Activated CD4-positive, alpha-beta T cell treated with anti-CD3 and anti-CD28 coated beads, Interleukin-2, amount 10 ng/mL, durations not matched to agents 24 days and 14 days (primary cell): ENCODE measurements at regions of chr14 and their contacts with region 1.

Region 1: GRCh38 chr14:49633640-49634546 is 1.2 kb downstream of the DNAAF2 start:
- DNase-seq: peak; percentile 98
- H3K4me3 Mint-ChIP-seq: peak overlapping the region; percentile 99
- H3K27ac Mint-ChIP-seq: peak overlapping the region; percentile 93
- H3K4me1 Mint-ChIP-seq: peaks cover 29% of the 10 kb centered on the region
- H3K27me3 Mint-ChIP-seq: no peaks in the 10 kb centered on the region

Region 2: GRCh38 chr14:49620182-49621113 is 13.4 kb before region 1 on chr14 and contains the starts of genes MGAT2 and RPL36AL:
- intact Hi-C with region 1: loop called (anchors 1 kb)
- DNase-seq: peak; percentile 99
- H3K4me3 Mint-ChIP-seq: peak within 1 kb of the TSS; percentile 96
- H3K27ac Mint-ChIP-seq: peak within 1 kb of the TSS; percentile 96
- H3K4me1 Mint-ChIP-seq: peaks cover 36% of the 10 kb centered on the region
- H3K27me3 Mint-ChIP-seq: no peaks in the 10 kb centered on the region
- total RNA-seq, gene MGAT2: 45.6 and 48.5 TPM in 2 replicates
- total RNA-seq, gene RPL36AL: 221 and 229 TPM in 2 replicates

Region 3: DNA sequence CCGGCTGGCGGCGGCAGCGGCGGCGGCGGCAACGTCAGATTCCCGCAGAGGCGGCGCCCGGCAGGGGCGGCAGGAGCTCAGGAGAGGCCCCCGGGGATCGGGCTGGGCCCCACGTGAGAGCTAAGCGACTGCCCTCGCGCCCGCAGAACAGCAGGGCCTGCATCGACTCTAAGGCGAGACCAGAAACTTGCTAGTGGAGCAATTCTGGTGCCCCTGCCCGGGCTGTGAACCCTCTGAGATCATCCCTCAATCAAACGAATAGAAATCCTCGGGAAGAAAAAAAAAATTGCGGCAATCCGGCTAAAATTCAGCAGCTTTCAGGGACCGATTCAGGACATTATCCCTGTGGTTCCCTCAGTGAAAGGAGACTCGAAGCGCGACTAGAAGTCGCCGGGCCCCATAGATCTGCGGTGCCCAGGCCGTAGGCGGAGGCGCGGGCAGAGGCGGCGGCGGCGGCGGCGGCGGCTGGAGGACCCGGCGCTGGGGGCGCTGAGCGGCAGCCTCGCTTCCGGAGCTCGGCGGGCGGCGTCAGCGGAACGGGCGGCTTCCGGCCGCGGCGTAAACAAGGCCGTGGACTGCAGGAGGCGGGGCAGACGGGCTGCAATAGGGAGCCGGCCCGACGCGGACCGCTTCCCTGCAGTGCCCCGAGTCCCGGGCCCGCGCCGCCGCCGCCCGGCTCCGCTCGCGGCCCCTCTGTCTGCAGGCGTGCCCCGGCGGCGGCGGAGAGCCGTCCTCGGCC is 133.8 kb after region 1 on chr14 and contains the start of gene KLHDC2:
- intact Hi-C with region 1: loop called (anchors 1 kb)
- DNase-seq: peak; percentile 98
- H3K4me3 Mint-ChIP-seq: peak within 1 kb of the TSS; percentile 97
- H3K27ac Mint-ChIP-seq: peak within 1 kb of the TSS; percentile 100
- H3K4me1 Mint-ChIP-seq: peaks cover 31% of the 10 kb centered on the region
- H3K27me3 Mint-ChIP-seq: no peaks in the 10 kb centered on the region
- total RNA-seq, gene KLHDC2: 24.6 and 28.0 TPM in 2 replicates

Region 4: GRCh38 chr14:49852301-49853157 is 218.6 kb after region 1 on chr14 and contains the start of gene NEMF:
- intact Hi-C with region 1: loop called (anchors 2 kb)
- DNase-seq: peak; percentile 96
- H3K4me3 Mint-ChIP-seq: peak within 1 kb of the TSS; percentile 93
- H3K27ac Mint-ChIP-seq: peak within 1 kb of the TSS; percentile 98
- H3K4me1 Mint-ChIP-seq: peaks cover 34% of the 10 kb centered on the region
- H3K27me3 Mint-ChIP-seq: no peaks in the 10 kb centered on the region
- total RNA-seq, gene NEMF: 65.8 and 75.4 TPM in 2 replicates

Region 5: DNA sequence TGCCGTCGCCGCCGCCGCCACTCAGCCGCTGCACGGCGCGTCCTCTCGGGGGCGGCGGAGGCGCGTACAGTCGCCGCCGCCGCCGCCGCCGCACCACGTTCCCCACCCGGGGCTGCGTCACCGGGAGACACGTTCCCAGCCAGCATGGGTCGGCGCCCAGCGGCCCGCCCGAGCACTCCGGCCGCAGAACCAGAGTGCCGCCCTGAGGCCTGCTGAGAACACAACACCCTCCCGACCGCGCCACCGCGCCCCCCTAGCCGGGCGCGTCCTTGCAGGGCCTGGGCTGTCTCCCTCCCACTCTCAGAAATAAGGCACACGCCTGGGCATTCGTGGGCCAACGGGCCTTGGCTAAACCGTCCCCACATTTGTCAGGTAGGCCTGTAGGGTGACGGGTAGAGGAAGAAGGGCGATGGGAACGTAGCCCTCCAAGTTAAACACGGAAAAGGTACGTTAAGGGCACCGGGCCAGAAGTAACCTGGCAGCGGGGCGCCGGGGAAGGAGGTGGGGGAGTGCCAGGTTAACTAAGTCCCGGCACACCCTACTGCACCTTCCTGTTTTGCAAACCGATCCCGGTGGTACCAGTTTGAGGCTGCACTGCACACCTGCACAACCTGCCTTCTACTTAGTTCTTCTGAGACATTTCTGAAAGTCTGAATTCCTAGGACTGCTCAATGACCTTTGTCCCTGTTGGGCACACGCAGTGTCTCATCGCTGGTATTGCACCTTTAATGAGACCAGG is 898.8 kb after region 1 on chr14 and contains the start of gene MAP4K5:
- intact Hi-C with region 1: loop called (anchors 5 kb)
- DNase-seq: peak; percentile 96
- H3K4me3 Mint-ChIP-seq: peak within 1 kb of the TSS; percentile 89
- H3K27ac Mint-ChIP-seq: peak within 1 kb of the TSS; percentile 75
- H3K4me1 Mint-ChIP-seq: peaks cover 38% of the 10 kb centered on the region
- H3K27me3 Mint-ChIP-seq: peaks cover 17% of the 10 kb centered on the region
- total RNA-seq, gene MAP4K5: 24.3 and 24.6 TPM in 2 replicates